Activated B cell treated with CpG ODN at 0.5 μM for 24 hours (primary cell): ENCODE measurements at regions of chr3 and their contacts with region 1.

Region 1: DNA sequence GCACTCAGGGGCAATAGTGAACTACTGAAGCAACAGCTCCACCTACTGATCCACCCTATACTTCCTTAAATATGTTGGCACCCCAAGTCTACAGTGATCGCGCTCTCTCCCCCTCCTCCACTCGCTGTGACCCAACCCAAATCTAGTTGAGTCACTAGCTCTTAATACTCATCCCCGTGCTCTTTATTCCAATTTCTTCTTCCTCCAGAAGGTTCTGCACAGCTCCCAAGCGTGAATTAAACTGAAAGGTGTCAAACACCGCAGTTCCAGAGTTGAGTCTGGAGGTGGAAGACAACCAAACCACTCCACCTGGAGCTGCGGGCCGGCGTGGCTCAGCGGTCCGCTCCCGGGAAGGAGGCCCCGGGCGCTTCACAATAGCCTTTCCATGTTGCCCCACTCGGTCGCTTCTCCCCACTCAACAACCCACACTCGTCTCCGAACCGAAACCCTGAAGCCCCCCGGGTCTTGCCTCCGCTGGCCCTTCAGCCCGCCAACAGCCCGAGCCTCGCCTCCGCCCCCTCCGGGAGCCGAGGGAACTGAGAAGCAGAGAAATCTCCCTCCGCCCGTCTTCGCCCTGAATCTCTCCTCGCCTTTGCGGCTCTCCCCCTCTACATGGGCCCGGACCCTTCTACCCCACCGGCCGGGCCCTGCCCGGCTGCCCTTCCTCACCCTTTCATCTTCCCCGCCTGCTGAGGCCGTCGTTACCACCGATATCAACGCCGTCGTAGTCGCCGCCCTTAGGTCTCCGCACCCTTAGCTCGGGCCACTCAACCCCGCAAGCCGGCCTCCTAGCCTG is 578 bp downstream of the NAA50 start:
- DNase-seq: peak; percentile 70
- ATAC-seq: peak; percentile 63
- H3K4me3 Mint-ChIP-seq: peak overlapping the region; percentile 93
- H3K27ac Mint-ChIP-seq: peak overlapping the region; percentile 100
- H3K4me1 Mint-ChIP-seq: peaks cover 74% of the 10 kb centered on the region
- H3K27me3 Mint-ChIP-seq: no peaks in the 10 kb centered on the region
- CTCF ChIP-seq: no peak

Region 2: GRCh38 chr3:113051302-113051711 is 694.2 kb before region 1 on chr3:
- CTCF ChIA-PET with region 1: no interaction called
- POLR2A ChIA-PET with region 1: no interaction called
- intact Hi-C with region 1: loop called (anchors 1 kb)
- DNase-seq: peak; percentile 68
- ATAC-seq: peak; percentile 99
- H3K4me3 Mint-ChIP-seq: no peak overlapping the region
- H3K27ac Mint-ChIP-seq: no peak overlapping the region
- H3K4me1 Mint-ChIP-seq: peaks cover 3% of the 10 kb centered on the region
- H3K27me3 Mint-ChIP-seq: no peaks in the 10 kb centered on the region
- CTCF ChIP-seq: no peak

Region 3: GRCh38 chr3:113136071-113136470 is 609.4 kb before region 1 on chr3:
- CTCF ChIA-PET with region 1: no interaction called
- POLR2A ChIA-PET with region 1: no interaction called
- intact Hi-C with region 1: no loop called
- DNase-seq: no peak
- ATAC-seq: no peak
- H3K4me3 Mint-ChIP-seq: no peak overlapping the region
- H3K27ac Mint-ChIP-seq: no peak overlapping the region
- H3K4me1 Mint-ChIP-seq: no peaks in the 10 kb centered on the region
- H3K27me3 Mint-ChIP-seq: no peaks in the 10 kb centered on the region
- CTCF ChIP-seq: no peak

Region 4: DNA sequence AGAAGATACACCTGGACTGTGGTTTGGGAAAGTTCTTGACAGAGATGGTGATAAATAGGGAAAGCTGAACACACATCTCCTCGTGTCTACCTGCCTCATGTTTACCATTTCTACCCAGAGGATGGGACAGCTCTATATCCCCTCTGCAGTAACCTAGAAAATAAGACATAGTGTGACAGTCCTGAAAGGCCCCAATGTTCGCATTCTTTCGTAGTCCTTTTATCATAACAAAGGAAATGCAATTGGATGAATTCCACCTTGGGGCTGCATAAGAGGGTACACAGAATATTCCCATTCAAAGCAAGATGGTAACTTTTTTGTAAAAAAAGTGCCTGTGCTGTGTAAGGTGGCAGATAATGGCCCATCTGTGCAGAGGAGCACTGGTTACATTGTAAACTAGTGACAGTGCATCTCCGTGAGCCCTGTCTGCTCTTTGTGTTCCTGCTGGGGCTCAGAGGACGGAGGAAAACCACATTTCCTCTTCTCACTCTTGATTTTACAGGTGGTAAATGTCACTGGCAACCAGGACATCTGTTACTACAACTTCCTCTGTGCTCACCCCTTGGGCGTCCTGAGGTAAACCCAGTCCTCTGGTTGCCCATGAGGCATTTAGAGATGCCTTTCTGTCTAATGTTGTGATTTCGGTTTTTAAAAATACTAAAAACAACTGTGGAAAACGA is 138.8 kb before region 1 on chr3:
- CTCF ChIA-PET with region 1: no interaction called
- POLR2A ChIA-PET with region 1: no interaction called
- intact Hi-C with region 1: loop called (anchors 1 kb)
- DNase-seq: peak; percentile 26
- ATAC-seq: peak; percentile 96
- H3K4me3 Mint-ChIP-seq: peak overlapping the region; percentile 52
- H3K27ac Mint-ChIP-seq: peak overlapping the region; percentile 72
- H3K4me1 Mint-ChIP-seq: peaks cover 25% of the 10 kb centered on the region
- H3K27me3 Mint-ChIP-seq: no peaks in the 10 kb centered on the region
- CTCF ChIP-seq: no peak

Region 5: DNA sequence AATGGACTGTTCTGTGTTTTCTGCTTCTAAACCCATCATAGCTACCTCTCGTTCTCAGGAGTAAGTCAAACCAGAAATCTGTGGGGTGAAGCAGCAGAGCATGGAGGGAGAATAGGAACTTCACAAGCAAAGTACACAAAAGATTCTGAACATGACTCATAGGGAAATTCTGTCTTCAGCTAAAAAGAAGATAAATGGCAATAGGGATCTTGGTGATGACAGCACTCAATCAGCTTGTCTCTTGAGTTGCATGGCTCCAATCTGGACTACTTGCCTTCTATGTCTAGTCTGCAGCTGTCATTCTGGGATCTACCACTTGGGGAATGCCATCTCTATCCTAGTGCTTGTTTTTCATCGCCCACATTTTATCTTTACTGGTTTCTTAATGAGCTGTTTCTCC is 79.6 kb after region 1 on chr3:
- CTCF ChIA-PET with region 1: interaction called, 12 read pairs
- POLR2A ChIA-PET with region 1: interaction called, 50 read pairs
- intact Hi-C with region 1: loop called (anchors 1 kb)
- DNase-seq: no peak
- ATAC-seq: peak; percentile 90
- H3K4me3 Mint-ChIP-seq: peak overlapping the region; percentile 64
- H3K27ac Mint-ChIP-seq: peak overlapping the region; percentile 71
- H3K4me1 Mint-ChIP-seq: peaks cover 43% of the 10 kb centered on the region
- H3K27me3 Mint-ChIP-seq: no peaks in the 10 kb centered on the region
- CTCF ChIP-seq: no peak

Region 6: GRCh38 chr3:113947372-113948014 is 202.0 kb after region 1 on chr3 and contains the start of gene ZDHHC23:
- CTCF ChIA-PET with region 1: no interaction called
- POLR2A ChIA-PET with region 1: no interaction called
- intact Hi-C with region 1: loop called (anchors 1 kb)
- DNase-seq: peak; percentile 87
- ATAC-seq: peak; percentile 83
- H3K4me3 Mint-ChIP-seq: peak within 1 kb of the TSS; percentile 86
- H3K27ac Mint-ChIP-seq: peak within 1 kb of the TSS; percentile 84
- H3K4me1 Mint-ChIP-seq: peaks cover 18% of the 10 kb centered on the region
- H3K27me3 Mint-ChIP-seq: no peaks in the 10 kb centered on the region
- CTCF ChIP-seq: no peak
- total RNA-seq, gene ZDHHC23: 22.7 and 27.4 TPM in 2 replicates

Region 7: DNA sequence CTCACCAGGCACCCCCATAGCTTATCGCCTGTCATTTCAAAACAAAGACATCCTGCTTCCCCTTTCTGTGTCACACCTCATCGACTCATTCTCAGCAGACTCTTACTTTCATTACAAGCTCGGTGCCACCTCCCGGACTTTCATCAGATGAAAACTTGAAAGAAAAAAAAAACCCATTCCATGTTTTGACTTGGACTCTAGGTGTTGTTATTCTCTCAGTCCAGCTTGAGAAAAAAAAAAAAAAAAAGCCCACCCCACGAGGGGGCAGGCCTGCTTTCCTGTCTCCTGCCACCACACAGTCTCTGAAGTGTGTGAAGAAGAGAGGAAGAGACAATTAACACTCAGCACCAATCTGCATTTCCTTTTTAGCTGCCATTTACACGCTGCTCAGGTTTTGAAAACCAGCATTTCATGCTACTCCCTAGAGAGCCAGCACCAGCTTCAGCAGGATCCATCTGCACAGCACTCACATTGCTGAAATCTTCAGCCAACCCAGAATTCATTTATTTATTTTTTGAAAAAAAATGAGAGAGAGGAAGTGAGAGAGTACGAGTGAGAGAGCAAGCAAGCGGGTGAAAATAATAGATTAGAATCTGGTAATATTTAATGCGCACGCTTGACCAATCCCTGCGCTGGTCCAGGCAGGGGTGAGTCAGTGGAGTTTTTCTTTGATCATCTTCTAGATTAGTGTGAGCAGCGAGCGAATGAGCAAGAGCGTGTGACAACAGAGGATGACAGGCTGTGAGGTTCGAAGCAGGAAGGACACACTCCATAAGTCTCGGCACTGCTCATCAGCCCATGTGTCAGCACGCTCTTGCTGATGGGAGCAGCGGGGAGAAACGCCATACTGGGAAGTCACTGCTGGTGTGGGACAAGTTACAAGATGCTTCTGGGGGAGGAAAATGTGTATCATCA is 468.4 kb after region 1 on chr3:
- CTCF ChIA-PET with region 1: no interaction called
- POLR2A ChIA-PET with region 1: interaction called, 15 read pairs
- intact Hi-C with region 1: loop called (anchors 1 kb)
- DNase-seq: peak; percentile 64
- ATAC-seq: peak; percentile 71
- H3K4me3 Mint-ChIP-seq: no peak overlapping the region
- H3K27ac Mint-ChIP-seq: no peak overlapping the region
- H3K4me1 Mint-ChIP-seq: peaks cover 27% of the 10 kb centered on the region
- H3K27me3 Mint-ChIP-seq: no peaks in the 10 kb centered on the region
- CTCF ChIP-seq: no peak